ENCODE measurements at regions of chr10 and their contacts with region 1.

Region 1: DNA sequence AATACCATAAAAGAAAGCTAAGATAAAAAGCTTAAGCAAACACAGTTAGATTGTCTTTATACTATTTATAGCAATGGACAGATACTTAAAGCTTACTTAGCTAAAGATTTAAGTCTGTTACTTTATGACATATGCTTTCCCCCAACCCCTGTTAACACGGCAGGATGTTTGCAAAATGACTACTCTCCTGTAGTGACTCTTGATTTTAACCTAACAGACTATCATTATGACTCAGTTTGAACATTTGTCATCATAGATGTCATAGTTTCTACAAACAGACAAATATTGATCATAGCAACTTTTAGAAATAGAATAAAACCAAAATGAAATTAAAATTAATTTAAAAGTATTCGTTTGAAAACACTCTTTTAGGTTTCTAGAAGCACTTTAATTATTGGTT is 7.8 kb upstream of the COMMD3 start:
- DNase-seq: peak; percentile 60
- ATAC-seq: peak; percentile 99
- H3K4me3 Mint-ChIP-seq: no peak overlapping the region
- H3K27ac Mint-ChIP-seq: no peak overlapping the region
- H3K4me1 Mint-ChIP-seq: peaks cover 10% of the 10 kb centered on the region
- H3K27me3 Mint-ChIP-seq: peaks cover 3% of the 10 kb centered on the region

Region 2: DNA sequence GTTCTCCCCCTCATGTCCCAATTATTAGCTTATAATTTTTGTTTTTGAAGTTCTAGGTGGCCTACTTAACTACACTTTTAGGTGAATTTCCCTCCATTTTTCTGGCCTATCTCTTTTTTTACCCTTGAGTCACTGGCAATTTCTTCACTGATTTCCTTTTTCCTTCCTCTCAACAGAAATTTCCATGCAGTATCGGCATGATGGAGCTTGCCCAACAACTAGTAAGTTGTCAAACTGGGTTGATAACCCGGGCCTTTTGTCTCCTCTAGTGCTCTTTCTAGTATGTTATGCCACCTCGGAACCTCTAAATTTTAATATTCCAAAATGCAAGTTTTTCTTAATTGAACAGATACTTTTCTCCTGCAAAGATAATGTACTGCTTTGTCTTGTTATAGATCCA is 627.2 kb before region 1 on chr10:
- CTCF ChIA-PET with region 1: no interaction called
- POLR2A ChIA-PET with region 1: no interaction called
- intact Hi-C with region 1: no loop called
- DNase-seq: no peak
- ATAC-seq: no peak
- H3K4me3 Mint-ChIP-seq: no peak overlapping the region
- H3K27ac Mint-ChIP-seq: no peak overlapping the region
- H3K4me1 Mint-ChIP-seq: no peaks in the 10 kb centered on the region
- H3K27me3 Mint-ChIP-seq: no peaks in the 10 kb centered on the region

Region 3: GRCh38 chr10:21943633-21944265 is 364.6 kb before region 1 on chr10:
- CTCF ChIA-PET with region 1: no interaction called
- POLR2A ChIA-PET with region 1: no interaction called
- intact Hi-C with region 1: no loop called
- DNase-seq: no peak
- ATAC-seq: no peak
- H3K4me3 Mint-ChIP-seq: no peak overlapping the region
- H3K27ac Mint-ChIP-seq: no peak overlapping the region
- H3K4me1 Mint-ChIP-seq: peaks cover 11% of the 10 kb centered on the region
- H3K27me3 Mint-ChIP-seq: no peaks in the 10 kb centered on the region

Region 4: DNA sequence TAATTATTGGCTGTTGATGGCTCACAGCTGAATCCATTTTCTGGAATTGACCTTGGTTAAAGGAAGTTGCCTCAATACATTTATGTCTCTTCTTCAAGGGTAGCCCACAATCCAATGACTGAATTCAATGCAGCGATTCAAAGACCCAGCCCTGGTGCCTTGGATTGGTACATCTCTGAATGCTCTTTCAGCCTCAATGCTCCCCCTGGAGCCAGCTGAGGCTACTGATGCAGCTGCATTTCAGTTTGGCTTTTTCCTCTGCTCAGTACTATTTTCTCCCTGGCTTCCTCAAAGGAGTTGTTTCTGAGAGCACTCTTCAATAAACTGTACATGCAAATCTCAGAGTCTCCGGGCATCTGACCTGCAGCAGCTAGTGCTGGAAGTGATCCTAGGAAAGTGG is 89.9 kb before region 1 on chr10:
- CTCF ChIA-PET with region 1: no interaction called
- POLR2A ChIA-PET with region 1: no interaction called
- intact Hi-C with region 1: loop called in 1 of 2 experiments (anchors 1 kb)
- DNase-seq: peak; percentile 13
- ATAC-seq: no peak
- H3K4me3 Mint-ChIP-seq: no peak overlapping the region
- H3K27ac Mint-ChIP-seq: no peak overlapping the region
- H3K4me1 Mint-ChIP-seq: peaks cover 26% of the 10 kb centered on the region
- H3K27me3 Mint-ChIP-seq: peaks cover 3% of the 10 kb centered on the region

Region 5: DNA sequence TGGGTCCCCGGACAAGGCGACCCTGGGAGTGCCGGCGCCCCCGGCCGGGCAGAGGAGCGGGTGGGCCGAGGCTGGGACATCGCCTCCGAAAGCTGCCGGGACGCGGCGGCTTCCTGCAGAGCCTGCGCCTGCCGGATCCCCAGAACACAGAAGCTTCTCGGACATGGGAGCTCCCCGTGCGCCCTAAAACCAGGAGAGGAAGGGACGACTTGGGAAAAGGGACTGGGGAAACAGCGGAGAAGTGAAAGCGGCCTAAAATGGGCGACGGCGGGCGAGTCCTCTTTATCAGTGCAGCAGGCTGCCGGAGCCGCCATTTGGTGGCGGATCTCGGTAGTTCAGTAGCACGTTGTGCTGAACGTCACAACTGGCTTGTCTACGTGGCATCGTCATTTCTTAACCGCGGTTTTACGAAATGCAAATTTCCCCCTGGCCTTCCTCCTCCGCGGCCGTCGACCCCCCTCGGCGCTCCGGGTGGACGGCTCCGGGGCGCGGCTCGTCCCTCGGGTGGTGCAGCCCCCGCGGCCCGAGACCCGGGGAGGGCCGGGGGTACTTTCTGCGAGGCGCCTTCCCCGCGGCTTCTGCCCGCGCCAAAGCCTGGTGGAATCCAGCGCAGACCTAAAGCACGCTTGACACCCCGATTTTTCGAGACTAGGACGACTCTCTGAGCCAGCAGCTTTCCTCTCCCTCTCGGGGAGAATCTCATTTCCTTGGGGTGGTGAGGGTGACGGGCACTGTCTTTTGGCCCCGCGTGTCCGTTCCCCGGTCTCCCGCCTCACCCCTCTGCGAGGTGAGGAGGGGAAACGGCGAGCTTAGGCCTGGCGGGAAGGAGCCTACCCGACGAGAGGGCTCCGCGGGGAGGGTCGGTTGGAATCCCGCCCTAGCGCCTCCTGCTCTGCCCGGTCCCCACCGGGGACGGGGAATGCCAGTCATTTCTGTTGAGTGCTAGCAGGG is 27.1 kb after region 1 on chr10:
- CTCF ChIA-PET with region 1: no interaction called
- POLR2A ChIA-PET with region 1: no interaction called
- intact Hi-C with region 1: no loop called
- DNase-seq: peak; percentile 82
- ATAC-seq: peak; percentile 67
- H3K4me3 Mint-ChIP-seq: peak overlapping the region; percentile 67
- H3K27ac Mint-ChIP-seq: peak overlapping the region; percentile 85
- H3K4me1 Mint-ChIP-seq: peaks cover 40% of the 10 kb centered on the region
- H3K27me3 Mint-ChIP-seq: peaks cover 39% of the 10 kb centered on the region